ENCODE measurements at regions of chr18 and their contacts with region 1.

Region 1: GRCh38 chr18:616380-616995 is 19.7 kb downstream of the CLUL1 start:
- DNase-seq: no peak
- H3K4me3 ChIP-seq: no peak overlapping the region
- H3K27me3 ChIP-seq: no peaks in the 10 kb centered on the region
- CTCF ChIP-seq: peak; percentile 67

Region 2: GRCh38 chr18:292271-292670 is 324.2 kb before region 1 on chr18:
- CTCF ChIA-PET with region 1: interaction called, 12 read pairs
- POLR2A ChIA-PET with region 1: no interaction called
- DNase-seq: no peak
- H3K4me3 ChIP-seq: no peak overlapping the region
- H3K27me3 ChIP-seq: no peaks in the 10 kb centered on the region; the same call in 1 of the 2 replicates
- CTCF ChIP-seq: peak; percentile 39

Region 3: GRCh38 chr18:635171-635570 is 18.7 kb after region 1 on chr18:
- CTCF ChIA-PET with region 1: no interaction called
- POLR2A ChIA-PET with region 1: no interaction called
- DNase-seq: no peak
- H3K4me3 ChIP-seq: no peak overlapping the region
- H3K27me3 ChIP-seq: no peaks in the 10 kb centered on the region
- CTCF ChIP-seq: no peak

Measured in BJ (cell line).